Spleen (tissue), 13 donors: ENCODE measurements at regions of chr12 and their contacts with region 1.

Region 1: DNA sequence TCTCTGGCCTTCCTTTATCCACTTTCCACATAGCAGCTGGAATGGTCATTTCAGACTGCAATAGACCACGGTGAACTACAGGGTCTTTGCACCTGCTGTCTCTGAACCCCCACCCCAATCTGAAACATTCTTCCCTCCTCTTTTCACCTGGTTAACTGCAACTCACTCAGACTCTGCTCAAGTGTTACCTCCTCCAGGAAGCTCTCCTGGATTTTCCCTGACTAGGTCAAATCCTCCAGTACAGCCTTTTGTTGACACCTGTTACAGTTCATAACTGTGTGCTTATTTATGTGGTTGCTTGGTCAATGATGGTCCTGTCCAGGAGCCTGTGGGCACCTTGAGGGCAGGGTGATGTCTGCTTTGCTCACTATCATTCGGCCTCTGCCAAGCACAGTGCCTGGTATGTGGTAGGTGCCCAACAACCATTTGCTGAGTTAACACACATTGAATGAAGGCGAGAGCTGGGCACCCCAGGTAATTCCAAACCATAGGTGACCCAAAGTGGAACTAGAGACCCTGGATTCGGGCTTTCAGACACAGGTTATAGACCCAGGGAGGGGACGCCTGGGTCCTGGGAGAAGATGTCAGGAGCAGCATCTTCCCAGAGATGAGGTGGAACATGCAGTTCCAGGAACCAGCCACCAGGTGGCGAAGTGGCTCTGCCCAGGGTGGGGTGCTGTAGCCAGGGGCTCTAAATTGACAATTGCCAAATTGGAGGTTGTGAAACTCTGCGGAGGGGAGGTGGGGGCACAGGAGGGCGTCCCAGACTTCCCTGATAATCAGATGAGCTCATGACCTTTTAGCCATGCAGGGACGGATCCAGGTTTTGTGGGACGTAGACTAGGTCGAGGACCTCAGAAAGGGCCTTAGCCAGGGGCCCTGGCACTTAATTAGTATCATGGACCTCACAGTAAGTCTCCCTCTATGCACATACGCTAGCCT is 28.1 kb downstream of the TRPV4 start:
- DNase-seq: peak; percentile 92
- H3K4me3 ChIP-seq: no peak overlapping the region
- H3K27ac ChIP-seq: no peak overlapping the region
- H3K4me1 ChIP-seq: peaks cover 0 to 7% (median 4%) of the 10 kb centered on the region in 6 donors
- H3K27me3 ChIP-seq: no peaks in the 10 kb centered on the region
- CTCF ChIP-seq: peak; percentile 88 to 98 (median 93)
- POLR2A ChIP-seq: no peak

Region 2: DNA sequence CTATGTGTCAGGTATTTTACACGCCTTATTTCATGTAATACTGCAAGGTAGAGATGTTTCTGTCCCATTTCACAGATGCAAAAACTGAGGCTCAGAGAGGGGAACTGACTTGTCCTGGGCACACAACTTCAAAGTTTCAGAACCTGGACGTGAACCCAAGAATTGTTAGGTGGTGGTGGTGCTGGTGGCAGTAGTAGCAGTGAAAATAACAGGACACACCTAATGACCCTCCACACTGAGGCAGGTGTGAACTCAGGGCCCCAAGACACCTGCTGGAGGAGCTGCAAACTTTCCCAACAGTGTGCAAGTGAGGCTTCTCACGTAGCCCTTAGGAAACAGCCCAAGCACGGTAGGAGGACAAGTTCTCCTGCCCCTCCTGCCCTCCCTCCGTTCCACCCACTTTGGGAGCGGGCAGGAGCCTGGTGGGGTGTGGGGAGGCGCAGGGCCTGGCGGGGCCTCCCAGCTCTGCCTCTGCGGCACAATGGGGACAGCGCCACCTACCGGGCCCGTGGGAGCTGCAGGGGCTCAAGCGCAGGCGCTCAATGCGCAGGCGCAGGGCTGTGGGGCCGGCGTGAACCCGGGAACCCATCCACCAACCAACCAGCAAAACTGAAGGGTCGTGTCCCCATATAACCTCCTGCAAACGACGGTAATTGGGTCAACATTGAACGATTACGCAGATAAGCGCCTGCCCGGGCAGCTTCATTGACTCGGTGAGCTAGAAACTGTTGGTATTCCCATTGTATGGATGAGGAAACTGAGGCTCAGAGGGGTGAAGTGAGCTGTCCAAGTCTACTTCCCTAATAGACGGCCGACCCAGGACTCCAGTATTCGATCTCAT is 40.1 kb after region 1 on chr12:
- intact Hi-C with region 1: loop called (anchors 5 kb)
- DNase-seq: peak; percentile 98
- H3K4me3 ChIP-seq: peak overlapping the region in 4 of 8 donors; percentile 20 to 46 (median 24)
- H3K27ac ChIP-seq: peak overlapping the region in 6 of 8 donors; percentile 48 to 81 (median 76)
- H3K4me1 ChIP-seq: peaks cover 5 to 40% (median 18%) of the 10 kb centered on the region in 6 donors
- H3K27me3 ChIP-seq: no peaks in the 10 kb centered on the region
- CTCF ChIP-seq: peak; percentile 93 to 100 (median 99)
- POLR2A ChIP-seq: no peak

Region 3: GRCh38 chr12:109880016-109880931 is 75.2 kb after region 1 on chr12 and contains the start of gene GLTP:
- intact Hi-C with region 1: loop called (anchors 10 kb)
- DNase-seq: peak; percentile 97
- H3K4me3 ChIP-seq: peak within 1 kb of the TSS; percentile 55 to 92 (median 72)
- H3K27ac ChIP-seq: peak within 1 kb of the TSS; percentile 67 to 94 (median 90)
- H3K4me1 ChIP-seq: peaks cover 22 to 58% (median 50%) of the 10 kb centered on the region in 6 donors
- H3K27me3 ChIP-seq: no peaks in the 10 kb centered on the region
- CTCF ChIP-seq: peak in 8 of 11 experiments; percentile 37 to 89 (median 78)
- POLR2A ChIP-seq: no peak
- total RNA-seq, gene GLTP: 25.6 to 45.5 (median 35.0) TPM

Region 4: DNA sequence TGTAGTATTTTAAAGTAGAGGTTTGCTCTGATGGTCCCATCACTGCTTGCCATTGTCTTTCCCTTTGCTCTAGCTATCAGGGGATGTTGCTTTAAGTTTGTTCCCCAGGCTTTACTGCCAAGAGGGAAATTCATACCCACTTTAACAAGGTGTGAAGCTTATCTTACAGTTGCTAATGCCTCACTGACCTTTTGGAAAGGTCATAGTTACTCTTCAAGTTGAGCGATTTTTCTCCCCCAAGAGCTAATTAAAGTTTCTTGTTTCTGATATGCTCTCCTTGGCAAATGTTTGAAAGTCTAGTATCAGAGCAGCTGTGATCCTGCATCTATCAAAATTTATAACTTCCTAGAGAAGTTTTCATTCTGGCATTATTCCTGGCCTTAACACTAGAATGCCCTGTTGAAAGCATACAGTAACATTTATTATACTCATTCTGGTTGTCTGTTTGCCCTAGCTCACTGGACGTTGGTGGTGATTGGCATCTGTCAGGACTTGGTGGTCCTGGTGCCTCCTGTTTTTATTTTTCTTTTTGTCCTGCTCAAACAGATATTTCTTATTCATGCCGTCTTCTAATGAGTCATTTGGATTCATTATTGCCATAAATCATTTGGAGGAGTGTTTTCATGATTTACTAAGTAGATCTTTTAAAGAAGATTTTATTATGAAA is 484.1 kb after region 1 on chr12:
- intact Hi-C with region 1: no loop called
- DNase-seq: no peak
- H3K4me3 ChIP-seq: no peak overlapping the region
- H3K27ac ChIP-seq: peak overlapping the region in 3 of 8 donors; percentile 11 to 36 (median 16)
- H3K4me1 ChIP-seq: peaks cover 31 to 71% (median 59%) of the 10 kb centered on the region in 6 donors
- H3K27me3 ChIP-seq: no peaks in the 10 kb centered on the region
- CTCF ChIP-seq: no peak
- POLR2A ChIP-seq: no peak